GM10248 (cell line): ENCODE measurements at regions of chr6 and their contacts with region 1.

Region 1: DNA sequence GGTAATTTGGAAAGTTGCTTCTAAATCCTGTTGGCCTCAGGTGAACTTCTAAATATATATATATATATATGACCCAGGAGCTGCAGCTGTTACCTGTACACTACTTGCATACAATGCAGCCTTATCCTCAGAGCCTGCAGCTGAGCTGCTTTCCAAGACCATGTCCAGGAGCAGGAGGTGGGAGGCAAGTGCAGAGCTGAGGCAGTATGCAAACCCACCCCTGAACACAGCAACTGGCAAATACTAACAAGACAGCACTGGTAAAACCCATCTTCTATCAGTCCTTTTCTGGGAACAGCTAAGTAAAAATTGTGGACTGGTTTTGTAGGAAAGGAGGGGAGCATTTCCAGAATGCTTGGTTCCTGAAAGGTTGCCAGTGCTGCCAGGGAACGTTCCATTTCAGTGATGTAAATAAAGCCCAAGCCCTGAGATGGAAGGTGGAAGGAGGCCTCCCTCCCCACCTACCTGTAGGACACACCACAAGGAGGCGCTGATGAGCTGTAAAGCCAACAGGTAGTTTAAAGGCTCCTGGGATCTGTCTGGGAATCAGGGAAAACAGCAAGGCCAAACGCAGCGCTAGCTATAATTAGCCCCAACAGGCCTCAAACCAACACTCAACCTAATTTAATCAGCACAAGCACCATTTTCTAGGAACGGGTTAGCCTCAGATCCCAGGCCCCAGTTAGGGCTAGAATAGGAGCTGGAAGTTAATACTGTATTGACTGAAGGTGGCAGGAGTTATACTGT is 93.8 kb upstream of the MAP7 start:
- DNase-seq: peak; percentile 56
- CTCF ChIP-seq: peak; percentile 80

Region 2: GRCh38 chr6:136600818-136601217 is 43.2 kb before region 1 on chr6:
- CTCF ChIA-PET with region 1: interaction called, 19 read pairs
- POLR2A ChIA-PET with region 1: no interaction called
- DNase-seq: no peak
- CTCF ChIP-seq: no peak

Region 3: DNA sequence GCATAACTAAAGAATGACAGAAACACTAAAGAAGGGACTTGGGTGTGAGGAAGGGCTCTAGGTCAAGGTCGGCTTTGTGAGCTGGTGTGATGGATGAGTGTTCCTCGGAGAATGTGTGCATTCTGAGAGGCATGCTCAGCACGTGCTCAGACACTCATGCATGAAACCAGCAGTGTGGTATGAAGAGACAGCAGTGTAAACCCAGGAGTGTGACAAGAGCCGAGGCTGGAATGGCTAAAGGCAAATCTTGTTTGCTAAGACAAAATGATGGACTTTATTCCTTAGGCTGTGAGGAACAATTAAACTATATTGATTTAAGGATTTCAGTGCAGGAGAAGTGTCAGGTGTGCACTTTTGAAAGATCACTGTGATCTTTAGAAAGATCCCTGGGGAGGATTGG is 13.6 kb after region 1 on chr6:
- CTCF ChIA-PET with region 1: interaction called, 29 read pairs
- POLR2A ChIA-PET with region 1: no interaction called
- DNase-seq: no peak
- CTCF ChIP-seq: no peak

Region 4: DNA sequence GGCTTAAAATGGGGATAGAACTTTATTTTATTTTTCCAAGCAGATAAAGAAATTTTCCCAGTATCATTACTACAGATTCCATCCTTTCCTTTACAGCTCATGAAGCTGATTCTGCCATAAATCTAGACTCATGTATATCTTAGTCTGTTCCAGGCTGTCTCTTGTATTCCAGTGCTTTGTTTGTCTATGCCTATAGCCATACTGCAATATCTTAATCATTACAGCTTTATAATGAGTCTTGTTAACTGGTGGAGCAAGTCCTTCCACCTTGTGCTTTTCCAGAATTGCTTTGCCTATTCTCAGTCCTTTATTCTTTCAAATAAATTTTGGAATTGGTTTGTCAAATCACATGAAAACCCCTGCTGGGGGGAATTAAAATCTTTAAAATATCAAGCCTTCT is 49.1 kb after region 1 on chr6:
- CTCF ChIA-PET with region 1: interaction called, 12 read pairs
- POLR2A ChIA-PET with region 1: no interaction called
- DNase-seq: no peak
- CTCF ChIP-seq: no peak

Region 5: GRCh38 chr6:136761227-136761922 is 117.4 kb after region 1 on chr6:
- CTCF ChIA-PET with region 1: interaction called, 40 read pairs
- POLR2A ChIA-PET with region 1: no interaction called
- DNase-seq: no peak
- CTCF ChIP-seq: no peak

Region 6: GRCh38 chr6:136798031-136798430 is 154.0 kb after region 1 on chr6:
- CTCF ChIA-PET with region 1: interaction called, 348 read pairs
- POLR2A ChIA-PET with region 1: interaction called, 13 read pairs
- DNase-seq: no peak
- CTCF ChIP-seq: no peak

Region 7: GRCh38 chr6:136927292-136927691 is 283.3 kb after region 1 on chr6:
- CTCF ChIA-PET with region 1: interaction called, 10 read pairs
- POLR2A ChIA-PET with region 1: no interaction called
- DNase-seq: peak; percentile 48
- CTCF ChIP-seq: peak; percentile 52

Region 8: GRCh38 chr6:136975089-136975715 is 331.2 kb after region 1 on chr6:
- CTCF ChIA-PET with region 1: no interaction called
- POLR2A ChIA-PET with region 1: no interaction called
- DNase-seq: no peak
- CTCF ChIP-seq: no peak

Region 9: GRCh38 chr6:137076277-137077068 is 432.4 kb after region 1 on chr6:
- CTCF ChIA-PET with region 1: no interaction called
- POLR2A ChIA-PET with region 1: no interaction called
- DNase-seq: peak; percentile 70
- CTCF ChIP-seq: peak; percentile 89